ENCODE measurements at regions of chr12 and their contacts with region 1.

Region 1: DNA sequence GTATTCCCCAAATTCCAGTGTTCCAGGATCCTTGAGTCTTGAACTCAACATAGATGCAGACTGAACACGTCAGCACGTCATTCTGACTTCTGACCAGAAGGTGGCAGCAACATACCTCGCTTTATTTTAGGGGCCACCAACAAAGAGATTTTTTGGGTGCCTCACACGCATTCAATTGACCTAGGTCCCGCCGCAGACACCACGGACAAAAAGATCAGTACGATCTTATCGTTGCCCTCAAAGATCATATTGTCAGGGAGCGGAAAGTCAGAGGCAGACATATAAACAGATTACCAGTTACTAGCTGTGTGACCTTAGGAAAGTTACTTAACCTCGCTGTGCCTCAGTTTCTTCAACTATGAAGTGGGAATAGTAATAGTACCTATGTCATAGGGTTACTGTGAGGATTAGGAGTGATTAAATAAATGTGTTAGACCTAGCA is 6.5 kb upstream of the PRPH start:
- DNase-seq: no peak
- H3K4me3 ChIP-seq: no peak overlapping the region
- H3K27me3 ChIP-seq: peaks cover 8% of the 10 kb centered on the region
- CTCF ChIP-seq: peak; percentile 82

Region 2: GRCh38 chr12:49336645-49337584 is 48.5 kb after region 1 on chr12 and contains the start of gene C1QL4:
- CTCF ChIA-PET with region 1: interaction called, 28 read pairs
- POLR2A ChIA-PET with region 1: no interaction called
- DNase-seq: no peak
- H3K4me3 ChIP-seq: peak within 1 kb of the TSS; percentile 22
- H3K27me3 ChIP-seq: peaks cover 33% of the 10 kb centered on the region
- CTCF ChIP-seq: peak; percentile 97
- polyA plus RNA-seq, gene C1QL4: not detected in 2 replicates

Region 3: GRCh38 chr12:49342066-49342913 is 53.9 kb after region 1 on chr12:
- CTCF ChIA-PET with region 1: interaction called, 39 read pairs
- POLR2A ChIA-PET with region 1: no interaction called
- DNase-seq: no peak
- H3K4me3 ChIP-seq: peak overlapping the region; percentile 29
- H3K27me3 ChIP-seq: peaks cover 60% of the 10 kb centered on the region
- CTCF ChIP-seq: peak; percentile 86

Region 4: GRCh38 chr12:49347384-49348237 is 59.2 kb after region 1 on chr12:
- CTCF ChIA-PET with region 1: interaction called, 39 read pairs
- POLR2A ChIA-PET with region 1: no interaction called
- DNase-seq: no peak
- H3K4me3 ChIP-seq: peak overlapping the region; percentile 31
- H3K27me3 ChIP-seq: peaks cover 34% of the 10 kb centered on the region
- CTCF ChIP-seq: peak; percentile 95

Region 5: GRCh38 chr12:49428793-49429192 is 140.4 kb after region 1 on chr12:
- CTCF ChIA-PET with region 1: no interaction called
- POLR2A ChIA-PET with region 1: no interaction called
- DNase-seq: peak; percentile 36
- H3K4me3 ChIP-seq: no peak overlapping the region
- H3K27me3 ChIP-seq: no peaks in the 10 kb centered on the region
- CTCF ChIP-seq: no peak

Region 6: GRCh38 chr12:49580572-49581535 is 292.4 kb after region 1 on chr12:
- CTCF ChIA-PET with region 1: interaction called, 24 read pairs
- POLR2A ChIA-PET with region 1: no interaction called
- DNase-seq: no peak
- H3K4me3 ChIP-seq: no peak overlapping the region
- H3K27me3 ChIP-seq: no peaks in the 10 kb centered on the region
- CTCF ChIP-seq: peak; percentile 95

Measured in BJ (cell line).